Calu3 (cell line): ENCODE measurements at regions of chr19 and their contacts with region 1.

Region 1: DNA sequence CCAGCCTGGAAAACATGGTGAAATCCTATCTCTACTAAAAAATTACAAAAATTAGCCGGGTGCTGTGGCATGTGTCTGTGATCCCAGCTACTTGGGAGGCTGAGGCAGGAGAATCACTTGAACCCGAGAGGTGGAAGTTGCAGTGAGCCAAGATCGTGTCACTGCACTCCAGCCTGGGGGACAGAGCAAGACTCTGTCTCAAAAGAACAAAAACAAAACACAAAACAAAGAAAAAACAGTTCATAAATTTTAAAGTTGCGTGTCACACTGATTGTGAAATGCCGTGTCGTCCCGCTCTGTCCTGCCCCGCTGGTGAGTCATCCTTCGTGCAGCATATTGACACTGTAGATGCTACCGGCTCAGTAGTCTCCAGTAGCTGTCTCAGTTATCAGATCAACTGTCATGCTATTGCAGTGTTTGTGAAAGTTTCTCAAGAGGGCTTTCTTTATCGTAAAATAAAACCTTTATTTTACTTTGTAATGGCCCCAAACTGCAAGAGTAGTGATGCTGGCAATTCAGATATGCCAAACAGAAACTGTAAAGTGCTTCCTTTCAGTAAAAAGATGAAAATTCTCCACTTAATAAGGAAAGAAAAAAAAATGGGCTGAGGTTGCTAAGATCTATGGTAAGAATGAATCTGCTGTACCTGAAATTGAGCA is 36.4 kb upstream of the IGFL1 start:
- DNase-seq: peak; percentile 48
- H3K4me3 Mint-ChIP-seq: no peak overlapping the region
- H3K27ac Mint-ChIP-seq: no peak overlapping the region
- H3K4me1 Mint-ChIP-seq: no peaks in the 10 kb centered on the region
- H3K27me3 Mint-ChIP-seq: peaks cover 100% of the 10 kb centered on the region
- CTCF ChIP-seq: no peak

Region 2: DNA sequence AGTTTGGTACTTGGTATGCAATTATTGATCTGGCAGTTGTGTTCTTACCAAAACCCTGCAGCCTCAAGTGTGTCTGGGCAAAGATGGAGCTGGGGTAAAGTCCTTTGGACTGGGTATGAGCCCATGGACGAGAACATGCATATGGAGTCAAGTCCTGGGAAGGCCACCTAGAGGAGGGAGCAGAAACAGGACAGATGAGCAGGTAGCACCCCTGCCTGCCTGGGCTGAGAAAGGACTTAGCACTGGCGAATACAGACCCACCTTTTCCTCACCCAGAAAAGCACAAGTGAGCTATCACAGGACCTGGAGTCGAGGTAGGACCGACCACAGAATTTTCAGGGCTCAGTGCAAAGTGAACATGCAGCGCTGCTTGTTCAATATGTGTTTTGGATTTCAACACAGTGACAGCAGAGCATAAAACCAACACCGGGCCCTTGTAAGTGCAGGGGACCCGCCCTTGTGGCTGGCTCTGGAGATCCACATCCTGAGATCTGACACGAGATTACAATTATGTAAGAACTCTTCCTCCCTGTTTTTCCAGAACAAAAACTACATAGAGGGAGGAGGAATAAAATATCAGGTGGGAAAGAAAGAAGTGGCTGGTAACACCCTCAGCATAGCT is 19.1 kb before region 1 on chr19:
- CTCF ChIA-PET with region 1: no interaction called
- intact Hi-C with region 1: no loop called
- DNase-seq: no peak
- H3K4me3 Mint-ChIP-seq: no peak overlapping the region
- H3K27ac Mint-ChIP-seq: no peak overlapping the region
- H3K4me1 Mint-ChIP-seq: no peaks in the 10 kb centered on the region
- H3K27me3 Mint-ChIP-seq: peaks cover 93% of the 10 kb centered on the region
- CTCF ChIP-seq: no peak

Region 3: DNA sequence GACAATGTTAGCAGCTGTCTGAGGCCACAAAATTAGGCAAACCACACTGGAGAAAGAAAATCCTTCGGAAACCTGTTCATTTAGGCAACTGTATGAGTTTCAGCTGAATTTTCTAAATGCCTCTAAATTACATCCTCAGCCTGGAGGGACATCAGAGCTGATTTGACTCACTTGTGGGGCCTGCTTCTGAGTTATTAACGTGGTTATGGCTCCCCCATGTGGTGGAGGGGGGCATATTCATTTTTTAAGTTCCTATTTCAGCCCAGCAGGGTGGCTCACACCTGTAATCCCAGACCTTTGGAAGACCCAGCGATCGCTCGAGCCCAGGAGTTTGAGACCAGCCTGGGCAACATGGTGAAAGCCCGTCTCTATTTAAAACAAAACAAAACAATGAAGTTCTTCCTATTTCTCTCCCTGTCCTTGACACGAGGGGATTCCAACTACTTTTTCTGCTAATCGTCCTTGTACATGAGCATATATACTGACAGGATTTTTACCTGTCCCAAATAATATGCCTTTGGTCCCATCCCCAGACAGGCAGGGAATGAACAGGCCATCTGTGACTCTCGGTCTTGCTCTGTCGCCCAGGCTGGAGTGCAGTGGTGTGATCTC is 72.2 kb after region 1 on chr19:
- CTCF ChIA-PET with region 1: interaction called, 18 read pairs
- intact Hi-C with region 1: loop called (anchors 2 kb)
- DNase-seq: peak; percentile 88
- H3K4me3 Mint-ChIP-seq: no peak overlapping the region
- H3K27ac Mint-ChIP-seq: no peak overlapping the region
- H3K4me1 Mint-ChIP-seq: peaks cover 12% of the 10 kb centered on the region
- H3K27me3 Mint-ChIP-seq: peaks cover 71% of the 10 kb centered on the region
- CTCF ChIP-seq: peak; percentile 83